GM12878 (cell line): ENCODE measurements at regions of chr6 and their contacts with region 1.

Region 1: DNA sequence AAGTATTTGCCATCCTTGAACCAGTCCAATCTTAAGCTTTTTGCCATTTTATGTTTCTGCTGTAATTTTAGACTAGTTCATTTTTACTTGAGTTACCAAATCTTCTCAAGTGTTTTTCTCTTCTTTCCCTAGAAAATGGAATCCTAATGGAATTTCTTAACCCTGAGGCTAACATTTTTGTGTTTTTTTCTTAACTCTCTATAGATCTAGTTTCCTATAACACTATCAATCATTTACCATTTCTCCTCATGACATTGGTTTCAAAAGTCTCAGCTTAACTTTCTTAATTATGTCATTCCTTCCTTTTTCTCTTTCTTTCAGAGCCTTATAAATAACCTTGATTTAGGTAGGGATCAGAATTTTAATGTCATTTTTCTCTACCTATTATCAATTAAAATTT is 54.8 kb downstream of the SENP6 start:
- DNase-seq: no peak
- ATAC-seq: peak; percentile 46
- H3K4me3 ChIP-seq: no peak overlapping the region
- H3K27ac ChIP-seq: no peak overlapping the region
- H3K4me1 ChIP-seq: no peaks in the 10 kb centered on the region
- H3K27me3 ChIP-seq: no peaks in the 10 kb centered on the region
- CTCF ChIP-seq: no peak
- EP300 ChIP-seq: no peak
- POLR2A ChIP-seq: no peak
- RAD21 ChIP-seq: no peak

Region 2: DNA sequence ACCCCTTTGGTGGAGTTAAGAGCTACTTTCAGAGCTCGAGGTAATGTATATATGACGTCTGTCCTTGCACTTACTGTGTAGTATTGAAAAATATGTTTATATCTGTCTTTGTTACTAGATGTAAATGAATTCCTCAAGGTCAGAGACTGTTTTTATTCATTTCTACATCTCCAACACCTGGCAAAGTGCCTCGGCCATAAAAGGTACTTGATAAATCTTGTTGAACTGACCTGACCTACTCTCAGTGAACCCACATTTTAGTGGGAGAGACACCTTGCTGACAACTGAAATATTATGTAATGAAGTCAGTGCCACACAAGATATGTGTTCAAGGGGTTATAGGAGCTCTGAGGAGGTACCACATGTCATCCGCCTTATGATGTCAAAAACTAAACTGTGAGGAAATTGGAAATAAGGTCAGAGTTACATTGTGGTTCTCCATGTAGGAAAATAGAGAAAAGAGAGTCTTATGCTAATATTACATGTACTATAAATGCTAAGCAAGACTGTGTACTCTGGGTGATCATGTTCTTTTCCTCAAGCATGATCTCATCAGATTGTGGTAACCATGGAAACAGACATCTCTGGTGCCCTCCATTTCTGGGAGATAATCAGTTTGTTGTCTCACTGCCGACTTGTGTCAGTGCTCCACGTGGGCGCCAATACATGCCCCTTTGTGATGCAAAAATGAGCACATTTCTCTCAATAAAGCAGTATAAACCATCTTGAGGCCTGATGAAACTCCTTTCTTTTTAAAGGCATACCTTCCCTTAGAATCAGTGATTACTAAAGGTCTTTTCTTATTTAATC is 366.1 kb before region 1 on chr6:
- CTCF ChIA-PET with region 1: no interaction called
- POLR2A ChIA-PET with region 1: no interaction called
- RAD21 ChIA-PET with region 1: no interaction called
- SMC1A ChIA-PET with region 1: no interaction called
- in situ Hi-C with region 1: no loop called
- intact Hi-C with region 1: no loop called
- DNase-seq: no peak
- ATAC-seq: no peak
- H3K4me3 ChIP-seq: no peak overlapping the region
- H3K27ac ChIP-seq: no peak overlapping the region
- H3K4me1 ChIP-seq: no peaks in the 10 kb centered on the region
- H3K27me3 ChIP-seq: no peaks in the 10 kb centered on the region
- CTCF ChIP-seq: no peak
- EP300 ChIP-seq: no peak
- POLR2A ChIP-seq: no peak
- RAD21 ChIP-seq: no peak

Region 3: DNA sequence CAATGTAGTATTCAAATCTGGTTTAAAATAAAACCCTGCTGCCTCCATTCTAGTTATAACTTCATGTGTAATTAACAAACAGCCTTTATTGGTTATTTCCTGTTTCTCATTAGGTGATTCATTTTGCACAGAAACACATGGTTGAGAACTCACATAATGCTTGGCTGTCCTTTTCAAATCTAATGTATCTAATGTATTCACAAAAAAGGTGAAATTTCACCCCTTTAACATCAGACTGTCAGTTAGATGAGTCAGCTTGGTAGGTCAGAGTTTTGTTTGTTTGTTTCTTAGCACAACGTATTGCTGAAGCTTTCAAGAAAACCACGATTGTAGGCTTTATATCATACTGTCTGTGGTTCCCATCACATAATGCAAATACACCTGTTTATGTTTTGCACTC is 293.2 kb before region 1 on chr6:
- CTCF ChIA-PET with region 1: no interaction called
- POLR2A ChIA-PET with region 1: no interaction called
- RAD21 ChIA-PET with region 1: no interaction called
- SMC1A ChIA-PET with region 1: no interaction called
- in situ Hi-C with region 1: no loop called
- intact Hi-C with region 1: no loop called
- DNase-seq: no peak
- ATAC-seq: peak; percentile 66
- H3K4me3 ChIP-seq: no peak overlapping the region
- H3K27ac ChIP-seq: no peak overlapping the region
- H3K4me1 ChIP-seq: no peaks in the 10 kb centered on the region
- H3K27me3 ChIP-seq: no peaks in the 10 kb centered on the region
- CTCF ChIP-seq: no peak
- EP300 ChIP-seq: no peak
- POLR2A ChIP-seq: no peak
- RAD21 ChIP-seq: no peak

Region 4: GRCh38 chr6:75643173-75643572 is 13.3 kb before region 1 on chr6:
- CTCF ChIA-PET with region 1: interaction called, 3 read pairs
- POLR2A ChIA-PET with region 1: interaction called, 3 read pairs
- RAD21 ChIA-PET with region 1: no interaction called
- SMC1A ChIA-PET with region 1: interaction called, 19 read pairs
- in situ Hi-C with region 1: no loop called
- intact Hi-C with region 1: no loop called
- DNase-seq: no peak
- ATAC-seq: no peak
- H3K4me3 ChIP-seq: no peak overlapping the region
- H3K27ac ChIP-seq: no peak overlapping the region
- H3K4me1 ChIP-seq: no peaks in the 10 kb centered on the region
- H3K27me3 ChIP-seq: no peaks in the 10 kb centered on the region
- CTCF ChIP-seq: no peak
- EP300 ChIP-seq: no peak
- POLR2A ChIP-seq: no peak
- RAD21 ChIP-seq: no peak

Region 5: GRCh38 chr6:75673885-75674284 is 17.4 kb after region 1 on chr6:
- CTCF ChIA-PET with region 1: no interaction called
- POLR2A ChIA-PET with region 1: interaction called, 10 read pairs
- RAD21 ChIA-PET with region 1: no interaction called
- SMC1A ChIA-PET with region 1: interaction called, 3 read pairs
- in situ Hi-C with region 1: no loop called
- intact Hi-C with region 1: no loop called
- DNase-seq: no peak
- ATAC-seq: no peak
- H3K4me3 ChIP-seq: no peak overlapping the region
- H3K27ac ChIP-seq: no peak overlapping the region
- H3K4me1 ChIP-seq: no peaks in the 10 kb centered on the region
- H3K27me3 ChIP-seq: no peaks in the 10 kb centered on the region
- CTCF ChIP-seq: no peak
- EP300 ChIP-seq: no peak
- POLR2A ChIP-seq: no peak
- RAD21 ChIP-seq: no peak

Region 6: DNA sequence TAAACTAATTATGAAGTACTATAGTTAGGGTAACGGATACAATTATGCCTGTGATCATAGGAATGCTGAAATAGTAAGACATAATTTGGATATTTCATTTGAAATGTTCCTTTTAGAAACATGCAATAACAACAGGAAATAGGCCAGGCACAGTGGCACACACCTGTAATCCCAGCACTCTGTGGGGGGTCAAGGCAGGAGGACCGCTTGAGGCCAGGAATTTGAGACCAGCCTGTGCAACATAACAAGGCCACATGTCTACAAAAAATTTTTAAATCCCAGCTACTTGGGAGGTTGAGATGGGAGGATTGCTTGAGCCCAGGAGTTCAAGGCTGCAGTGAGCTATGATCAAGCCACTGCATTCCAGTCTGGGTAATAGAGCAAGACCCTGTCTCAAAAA is 66.9 kb after region 1 on chr6:
- CTCF ChIA-PET with region 1: no interaction called
- POLR2A ChIA-PET with region 1: no interaction called
- RAD21 ChIA-PET with region 1: no interaction called
- SMC1A ChIA-PET with region 1: no interaction called
- in situ Hi-C with region 1: no loop called
- intact Hi-C with region 1: no loop called
- DNase-seq: no peak
- ATAC-seq: no peak
- H3K4me3 ChIP-seq: no peak overlapping the region
- H3K27ac ChIP-seq: no peak overlapping the region
- H3K4me1 ChIP-seq: no peaks in the 10 kb centered on the region
- H3K27me3 ChIP-seq: no peaks in the 10 kb centered on the region
- CTCF ChIP-seq: no peak
- EP300 ChIP-seq: no peak
- POLR2A ChIP-seq: no peak
- RAD21 ChIP-seq: no peak

Region 7: DNA sequence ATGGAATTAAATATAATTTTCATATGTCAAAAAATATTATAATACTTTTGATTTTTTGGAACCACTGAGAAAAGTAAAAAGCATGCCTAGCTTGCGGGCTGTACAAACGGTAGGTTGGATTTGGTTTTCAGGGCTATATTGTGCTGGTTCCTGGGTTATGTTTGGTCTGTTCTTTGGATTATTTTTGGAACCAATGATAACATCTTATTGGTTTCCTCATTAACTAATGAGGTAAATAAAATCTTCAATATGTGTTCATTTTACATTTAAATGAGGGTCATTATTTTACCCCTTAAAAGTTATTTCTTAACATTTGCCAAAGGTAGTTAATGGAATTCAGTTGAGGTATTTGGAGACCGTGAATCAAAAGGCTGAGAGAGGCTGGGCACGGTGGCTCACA is 319.4 kb after region 1 on chr6:
- CTCF ChIA-PET with region 1: no interaction called
- POLR2A ChIA-PET with region 1: no interaction called
- RAD21 ChIA-PET with region 1: no interaction called
- SMC1A ChIA-PET with region 1: no interaction called
- in situ Hi-C with region 1: no loop called
- intact Hi-C with region 1: no loop called
- DNase-seq: no peak
- ATAC-seq: no peak
- H3K4me3 ChIP-seq: no peak overlapping the region
- H3K27ac ChIP-seq: no peak overlapping the region
- H3K4me1 ChIP-seq: no peaks in the 10 kb centered on the region
- H3K27me3 ChIP-seq: no peaks in the 10 kb centered on the region
- CTCF ChIP-seq: no peak
- EP300 ChIP-seq: no peak
- POLR2A ChIP-seq: no peak
- RAD21 ChIP-seq: no peak